B cell (primary cell): ENCODE measurements at regions of chr7 and their contacts with region 1.

Region 1: GRCh38 chr7:83439026-83439425 is 209.9 kb downstream of the SEMA3E start:
- DNase-seq: no peak
- ATAC-seq: no peak
- H3K4me3 ChIP-seq: no peak overlapping the region
- H3K4me3 Mint-ChIP-seq: no peak overlapping the region
- H3K27ac ChIP-seq: no peak overlapping the region
- H3K27ac Mint-ChIP-seq: no peak overlapping the region
- H3K4me1 ChIP-seq: no peaks in the 10 kb centered on the region
- H3K4me1 Mint-ChIP-seq: no peaks in the 10 kb centered on the region
- H3K27me3 ChIP-seq: no peaks in the 10 kb centered on the region
- H3K27me3 Mint-ChIP-seq: no peaks in the 10 kb centered on the region
- CTCF ChIP-seq: no peak

Region 2: GRCh38 chr7:83494683-83495082 is 55.7 kb after region 1 on chr7:
- CTCF ChIA-PET with region 1: no interaction called
- POLR2A ChIA-PET with region 1: no interaction called
- intact Hi-C with region 1: loop called (anchors 10 kb)
- DNase-seq: no peak
- ATAC-seq: no peak
- H3K4me3 ChIP-seq: no peak overlapping the region
- H3K4me3 Mint-ChIP-seq: no peak overlapping the region
- H3K27ac ChIP-seq: no peak overlapping the region
- H3K27ac Mint-ChIP-seq: no peak overlapping the region
- H3K4me1 ChIP-seq: no peaks in the 10 kb centered on the region
- H3K4me1 Mint-ChIP-seq: no peaks in the 10 kb centered on the region
- H3K27me3 ChIP-seq: no peaks in the 10 kb centered on the region
- H3K27me3 Mint-ChIP-seq: no peaks in the 10 kb centered on the region
- CTCF ChIP-seq: no peak